Activated CD8-positive, alpha-beta memory T cell treated with anti-CD3 and anti-CD28 coated beads, Interleukin-2, amount 10 ng/mL, durations not matched to agents 7 days and 5 days (primary cell): ENCODE measurements at regions of chr17 and their contacts with region 1.

Region 1: DNA sequence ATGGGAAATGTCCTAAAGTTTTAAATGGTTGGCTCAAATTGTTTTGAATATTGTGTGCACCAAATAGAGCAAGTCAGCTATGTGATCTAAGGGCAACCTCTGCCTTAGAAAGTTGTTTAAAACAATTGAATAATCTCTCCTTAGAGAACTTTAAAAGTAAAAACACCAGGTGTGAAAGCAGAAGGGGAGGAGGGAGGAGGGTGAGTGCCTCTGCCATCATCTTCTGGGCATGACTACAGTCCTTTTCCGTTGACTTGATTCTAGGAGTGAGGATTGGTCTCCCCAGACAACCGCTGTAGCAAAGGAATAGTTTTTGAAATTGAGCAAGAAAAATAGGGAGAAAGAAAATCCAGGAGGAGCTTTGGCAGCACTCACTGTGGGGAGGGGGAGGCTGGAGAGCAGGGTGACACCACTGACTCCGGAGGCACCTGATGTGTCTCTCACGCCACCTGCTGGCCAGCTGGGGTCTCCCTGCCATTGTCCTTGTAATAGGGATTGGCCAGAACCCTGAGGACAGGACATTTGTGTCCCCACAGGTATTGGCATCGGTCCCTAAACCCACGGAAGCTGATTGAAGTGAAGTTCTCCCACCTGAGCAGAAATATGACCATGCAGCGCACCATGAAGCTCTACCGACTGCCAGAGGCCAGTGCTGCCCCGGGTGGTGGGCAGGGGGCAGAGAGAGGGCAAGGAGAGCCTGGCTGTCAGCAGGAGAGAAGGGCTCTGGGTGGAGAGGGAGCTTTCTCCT is 33.3 kb downstream of the PLCD3 start:
- DNase-seq: peak; percentile 82
- ATAC-seq: peak; percentile 91
- H3K4me3 Mint-ChIP-seq: no peak overlapping the region
- H3K27ac Mint-ChIP-seq: no peak overlapping the region
- H3K4me1 Mint-ChIP-seq: no peaks in the 10 kb centered on the region
- H3K27me3 Mint-ChIP-seq: no peaks in the 10 kb centered on the region

Region 2: DNA sequence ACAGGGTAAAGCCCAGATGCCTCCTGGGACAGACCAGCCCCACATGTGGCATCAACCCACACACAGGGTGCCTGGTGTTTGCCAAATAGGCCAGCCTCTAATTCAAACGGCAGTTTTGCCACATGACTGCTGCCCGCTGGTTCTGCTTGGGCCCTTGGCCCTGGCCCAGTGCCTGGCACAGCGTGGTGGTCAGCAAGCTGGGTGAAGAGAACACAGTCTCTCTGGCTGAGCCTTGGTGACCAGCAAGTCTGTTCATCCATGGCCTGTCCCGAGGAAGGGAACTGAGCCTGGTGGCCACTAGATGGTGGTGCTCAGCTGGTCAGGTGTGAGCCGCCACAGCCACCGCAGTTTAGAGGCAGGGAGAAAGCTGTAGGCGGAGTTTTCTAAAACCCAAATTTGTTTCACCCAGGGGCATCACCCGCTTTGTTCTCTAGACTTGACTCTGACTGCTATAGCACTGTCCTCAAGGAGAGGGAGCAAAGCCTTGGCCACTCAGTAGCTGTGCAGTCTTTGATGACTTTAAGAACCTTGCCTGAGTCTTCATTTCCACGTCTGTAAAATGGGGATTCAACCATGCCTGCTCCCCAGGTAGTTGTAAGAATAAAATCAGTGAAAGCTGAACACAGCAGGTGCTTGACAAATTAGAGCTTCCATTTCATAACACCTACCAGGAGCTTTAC is 179.0 kb before region 1 on chr17:
- CTCF ChIA-PET with region 1: interaction called, 19 read pairs
- DNase-seq: peak; percentile 80
- ATAC-seq: peak; percentile 85
- H3K4me3 Mint-ChIP-seq: no peak overlapping the region
- H3K27ac Mint-ChIP-seq: no peak overlapping the region
- H3K4me1 Mint-ChIP-seq: peaks cover 4% of the 10 kb centered on the region
- H3K27me3 Mint-ChIP-seq: peaks cover 26% of the 10 kb centered on the region

Region 3: GRCh38 chr17:45021607-45022287 is 77.3 kb before region 1 on chr17:
- CTCF ChIA-PET with region 1: interaction called, 12 read pairs
- DNase-seq: peak; percentile 64
- ATAC-seq: peak; percentile 81
- H3K4me3 Mint-ChIP-seq: no peak overlapping the region
- H3K27ac Mint-ChIP-seq: no peak overlapping the region
- H3K4me1 Mint-ChIP-seq: peaks cover 15% of the 10 kb centered on the region
- H3K27me3 Mint-ChIP-seq: peaks cover 34% of the 10 kb centered on the region

Region 4: DNA sequence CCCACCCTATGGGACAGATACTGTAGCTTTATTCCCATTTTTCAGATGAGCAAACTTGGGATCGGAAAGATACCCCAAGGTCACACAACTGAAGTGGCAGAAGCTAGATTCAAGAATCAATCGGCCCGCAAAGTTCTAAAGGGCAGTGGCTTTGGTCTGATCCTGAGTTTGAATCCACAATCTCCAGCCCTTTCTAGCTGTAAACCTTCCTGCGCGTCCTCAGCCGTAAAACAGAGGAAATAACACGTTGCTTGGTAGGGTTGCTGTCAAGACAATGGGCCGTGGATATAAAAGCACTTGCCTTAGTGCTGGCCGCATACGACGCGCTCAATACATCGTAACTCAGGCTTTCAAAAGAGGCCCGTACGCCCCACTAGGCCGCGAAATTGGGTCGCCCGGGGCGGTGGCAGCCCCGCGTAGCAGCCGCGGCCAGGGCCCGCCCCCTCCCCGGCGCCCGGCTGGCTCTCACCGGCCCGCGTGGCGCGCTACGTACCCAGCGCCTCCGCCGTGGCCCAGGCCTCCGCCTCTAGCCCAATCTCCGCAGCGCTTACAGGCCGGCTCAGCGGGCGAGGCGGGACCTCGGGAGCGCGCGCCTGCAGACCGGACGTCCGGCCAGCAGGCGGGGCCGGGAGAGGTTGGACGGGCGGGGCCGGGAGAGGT is 47.9 kb before region 1 on chr17 and contains the start of gene DCAKD:
- CTCF ChIA-PET with region 1: interaction called, 24 read pairs
- DNase-seq: peak; percentile 96
- ATAC-seq: peak; percentile 98
- H3K4me3 Mint-ChIP-seq: peak within 1 kb of the TSS; percentile 91
- H3K27ac Mint-ChIP-seq: peak within 1 kb of the TSS; percentile 91
- H3K4me1 Mint-ChIP-seq: peaks cover 45% of the 10 kb centered on the region
- H3K27me3 Mint-ChIP-seq: no peaks in the 10 kb centered on the region
- total RNA-seq, gene DCAKD: 29.4 to 34.3 TPM

Region 5: DNA sequence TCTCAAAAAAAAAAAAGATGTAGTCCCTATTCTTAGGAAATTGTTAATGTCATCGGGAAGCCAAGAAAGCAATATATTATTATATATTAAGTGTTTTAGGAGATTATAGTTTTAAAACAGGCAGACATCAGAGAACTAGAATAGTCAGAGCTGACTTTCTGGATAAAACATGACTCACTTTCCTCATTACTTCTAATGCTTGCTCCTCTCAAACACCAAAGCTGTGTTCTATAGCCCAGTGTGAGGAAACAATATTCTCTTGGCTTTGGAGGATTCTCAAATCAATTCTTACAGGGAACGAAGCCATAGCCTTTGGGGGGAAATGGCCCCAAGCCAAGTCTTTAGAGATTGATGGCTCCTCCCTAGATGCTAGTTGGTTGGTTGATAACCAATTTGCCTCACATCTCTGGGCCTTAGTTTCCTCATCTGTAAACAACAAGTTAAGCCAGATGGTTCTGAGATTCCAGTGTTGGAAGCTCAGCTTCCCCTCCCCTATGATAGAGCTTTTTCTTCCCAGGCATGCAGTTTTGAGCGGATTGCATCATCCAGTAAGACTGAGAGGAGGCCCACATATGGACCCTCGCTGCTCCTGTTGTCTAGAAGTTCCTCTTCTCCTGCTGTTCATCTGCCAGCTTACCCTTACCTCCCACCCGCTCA is 25.5 kb before region 1 on chr17:
- CTCF ChIA-PET with region 1: interaction called, 13 read pairs
- DNase-seq: no peak
- ATAC-seq: no peak
- H3K4me3 Mint-ChIP-seq: no peak overlapping the region
- H3K27ac Mint-ChIP-seq: no peak overlapping the region
- H3K4me1 Mint-ChIP-seq: peaks cover 20% of the 10 kb centered on the region
- H3K27me3 Mint-ChIP-seq: no peaks in the 10 kb centered on the region

Region 6: GRCh38 chr17:45115871-45116724 is 17.1 kb after region 1 on chr17:
- CTCF ChIA-PET with region 1: interaction called, 14 read pairs
- DNase-seq: no peak
- ATAC-seq: no peak
- H3K4me3 Mint-ChIP-seq: no peak overlapping the region
- H3K27ac Mint-ChIP-seq: no peak overlapping the region
- H3K4me1 Mint-ChIP-seq: no peaks in the 10 kb centered on the region
- H3K27me3 Mint-ChIP-seq: peaks cover 3% of the 10 kb centered on the region

Region 7: GRCh38 chr17:45127239-45127597 is 28.2 kb after region 1 on chr17:
- CTCF ChIA-PET with region 1: no interaction called
- DNase-seq: no peak
- ATAC-seq: no peak
- H3K4me3 Mint-ChIP-seq: no peak overlapping the region
- H3K27ac Mint-ChIP-seq: no peak overlapping the region
- H3K4me1 Mint-ChIP-seq: peaks cover 5% of the 10 kb centered on the region
- H3K27me3 Mint-ChIP-seq: peaks cover 11% of the 10 kb centered on the region

Region 8: DNA sequence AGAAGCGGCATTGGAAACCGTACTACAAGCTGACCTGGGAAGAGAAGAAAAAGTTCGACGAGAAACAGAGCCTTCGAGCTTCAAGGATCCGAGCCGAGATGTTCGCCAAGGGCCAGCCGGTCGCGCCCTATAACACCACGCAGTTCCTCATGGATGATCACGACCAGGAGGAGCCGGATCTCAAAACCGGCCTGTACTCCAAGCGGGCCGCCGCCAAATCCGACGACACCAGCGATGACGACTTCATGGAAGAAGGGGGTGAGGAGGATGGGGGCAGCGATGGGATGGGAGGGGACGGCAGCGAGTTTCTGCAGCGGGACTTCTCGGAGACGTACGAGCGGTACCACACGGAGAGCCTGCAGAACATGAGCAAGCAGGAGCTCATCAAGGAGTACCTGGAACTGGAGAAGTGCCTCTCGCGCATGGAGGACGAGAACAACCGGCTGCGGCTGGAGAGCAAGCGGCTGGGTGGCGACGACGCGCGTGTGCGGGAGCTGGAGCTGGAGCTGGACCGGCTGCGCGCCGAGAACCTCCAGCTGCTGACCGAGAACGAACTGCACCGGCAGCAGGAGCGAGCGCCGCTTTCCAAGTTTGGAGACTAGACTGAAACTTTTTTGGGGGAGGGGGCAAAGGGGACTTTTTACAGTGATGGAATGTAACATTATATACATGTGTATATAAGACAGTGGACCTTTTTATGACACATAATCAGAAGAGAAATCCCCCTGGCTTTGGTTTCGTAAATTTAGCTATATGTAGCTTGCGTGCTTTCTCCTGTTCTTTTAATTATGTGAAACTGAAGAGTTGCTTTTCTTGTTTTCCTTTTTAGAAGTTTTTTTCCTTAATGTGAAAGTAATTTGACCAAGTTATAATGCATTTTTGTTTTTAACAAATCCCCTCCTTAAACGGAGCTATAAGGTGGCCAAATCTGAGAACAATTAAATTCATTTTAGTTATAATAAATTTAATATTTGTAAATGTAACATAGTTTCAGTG is 50.9 kb after region 1 on chr17:
- CTCF ChIA-PET with region 1: no interaction called
- DNase-seq: peak; percentile 68
- ATAC-seq: peak; percentile 1
- H3K4me3 Mint-ChIP-seq: peak overlapping the region; percentile 99
- H3K27ac Mint-ChIP-seq: peak overlapping the region; percentile 100
- H3K4me1 Mint-ChIP-seq: peaks cover 38% of the 10 kb centered on the region
- H3K27me3 Mint-ChIP-seq: peaks cover 2% of the 10 kb centered on the region